T-cell (primary cell): ENCODE measurements at regions of chr1 and their contacts with region 1.

Region 1: DNA sequence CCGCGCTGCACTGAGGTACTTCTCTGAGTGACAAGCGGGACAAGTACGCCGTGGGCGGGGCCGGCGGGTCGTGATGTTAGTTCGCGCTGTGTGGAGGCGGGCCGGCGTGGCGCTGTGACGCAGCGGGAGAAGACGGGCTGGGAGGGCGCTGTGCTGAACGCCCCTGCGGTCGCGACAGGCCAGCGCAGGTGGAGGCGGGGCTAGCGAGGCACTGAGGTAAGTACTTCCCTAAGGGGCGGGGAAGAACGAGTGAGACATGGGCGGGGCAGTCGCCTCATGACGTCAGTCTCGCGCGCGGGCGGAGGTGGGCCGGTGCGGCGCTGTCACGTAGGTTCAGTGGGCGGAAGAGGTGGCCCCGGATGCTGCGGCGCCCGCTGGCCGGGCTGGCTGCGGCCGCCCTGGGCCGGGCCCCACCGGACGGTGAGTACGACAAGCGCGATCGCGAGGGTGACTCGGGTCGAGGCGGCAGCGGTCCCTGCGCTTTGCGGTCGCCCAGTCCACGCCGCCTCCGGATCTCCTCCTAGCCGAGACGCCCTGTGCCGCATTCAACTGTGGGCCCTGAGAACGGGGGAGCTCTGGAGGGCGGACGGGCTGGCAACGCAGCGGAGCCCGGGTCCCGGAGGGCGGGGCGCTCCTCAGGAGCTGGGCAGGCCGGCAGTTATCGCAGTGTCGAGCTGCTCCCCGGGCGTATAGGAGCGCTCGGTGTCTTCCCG is at the start of gene GUK1:
- DNase-seq: peak; percentile 99 to 100 (median 100)
- ATAC-seq: peak; percentile 87 to 96 (median 92)
- H3K4me3 ChIP-seq: peak within 1 kb of the TSS; percentile 85 to 97
- H3K4me3 Mint-ChIP-seq: peak within 1 kb of the TSS; percentile 94 to 96 (median 95)
- H3K27ac ChIP-seq: peak within 1 kb of the TSS; percentile 98
- H3K27ac Mint-ChIP-seq: peak within 1 kb of the TSS; percentile 96 to 98
- H3K4me1 ChIP-seq: peaks cover 12 to 65% of the 10 kb centered on the region in 2 experiments
- H3K4me1 Mint-ChIP-seq: peaks cover 41 to 49% (median 47%) of the 10 kb centered on the region in 3 donors
- H3K27me3 ChIP-seq: no peaks in the 10 kb centered on the region
- H3K27me3 Mint-ChIP-seq: peaks cover 0 to 4% of the 10 kb centered on the region in 2 donors
- total RNA-seq, gene GUK1: 201 to 318 (median 223) TPM

Region 2: DNA sequence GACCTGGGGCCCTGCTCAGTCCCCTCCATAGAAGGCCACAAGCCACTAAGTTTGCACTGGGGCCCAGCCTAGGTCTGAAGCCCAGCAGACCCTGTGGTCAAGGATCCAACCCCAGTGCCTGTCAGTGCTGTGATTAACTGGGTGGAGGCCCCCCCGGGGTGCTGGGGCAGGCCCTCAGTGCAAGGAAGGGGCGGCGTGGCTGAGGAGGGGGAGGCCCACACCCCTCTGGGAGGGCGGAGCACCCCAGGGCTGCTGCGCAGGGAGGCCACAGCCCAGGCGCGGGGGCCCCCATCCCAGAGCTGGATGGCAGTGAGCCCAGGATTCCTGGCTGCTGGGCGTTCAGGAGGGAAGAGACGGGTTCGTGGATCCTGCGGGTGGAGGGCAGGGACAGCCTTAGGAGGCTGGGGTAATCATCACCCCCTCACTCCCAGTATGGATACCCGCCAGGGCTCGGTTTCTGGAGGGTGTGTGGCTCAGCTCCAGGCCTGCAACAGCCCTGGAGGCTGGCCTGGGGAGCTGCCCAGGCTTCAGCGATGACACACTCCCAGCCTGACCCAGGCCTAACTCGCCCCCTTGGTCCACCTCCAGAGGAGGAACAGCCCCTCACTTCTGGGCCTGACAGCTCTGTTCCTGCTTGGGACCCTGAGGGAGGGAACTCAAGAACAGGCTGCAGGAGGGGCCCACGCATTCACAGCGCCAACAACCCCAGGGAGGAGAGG is 10.5 kb after region 1 on chr1:
- CTCF ChIA-PET with region 1: no interaction called
- POLR2A ChIA-PET with region 1: no interaction called
- DNase-seq: no peak
- ATAC-seq: peak in 1 of 4 experiments; percentile 4
- H3K4me3 ChIP-seq: no peak overlapping the region
- H3K4me3 Mint-ChIP-seq: no peak overlapping the region
- H3K27ac ChIP-seq: no peak overlapping the region
- H3K27ac Mint-ChIP-seq: no peak overlapping the region
- H3K4me1 ChIP-seq: peaks cover 3 to 34% of the 10 kb centered on the region in 2 experiments
- H3K4me1 Mint-ChIP-seq: peaks cover 8 to 15% (median 12%) of the 10 kb centered on the region in 3 donors
- H3K27me3 ChIP-seq: peaks cover 0 to 6% of the 10 kb centered on the region in 2 experiments
- H3K27me3 Mint-ChIP-seq: no peaks in the 10 kb centered on the region

Region 3: DNA sequence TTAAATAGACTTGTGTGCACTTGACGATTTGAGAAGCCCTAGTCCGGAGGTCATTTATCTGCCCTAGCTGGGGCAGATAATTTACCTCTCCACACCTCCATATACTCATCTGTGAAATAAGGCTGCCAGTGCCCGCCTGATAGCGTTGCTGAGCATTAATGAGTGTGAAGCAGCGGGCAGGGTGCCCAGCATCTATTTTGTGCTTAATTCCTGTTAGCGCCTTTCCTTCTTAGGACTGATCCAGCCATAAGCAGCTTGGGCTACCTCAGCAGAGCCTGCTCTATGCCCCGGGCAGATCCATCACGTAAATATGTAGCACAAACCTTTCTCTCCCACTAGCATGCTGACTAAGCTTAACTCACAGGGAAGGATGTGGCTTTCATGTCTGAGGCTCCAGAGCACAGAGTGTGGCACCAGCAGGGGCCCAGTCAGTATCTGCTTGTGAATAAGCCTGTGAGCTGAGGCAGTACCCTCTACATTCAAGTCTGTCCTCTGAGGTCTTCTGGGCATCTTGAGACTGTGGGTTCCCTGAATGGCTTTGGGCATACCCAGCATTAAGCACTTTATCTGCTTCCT is 325.6 kb after region 1 on chr1:
- CTCF ChIA-PET with region 1: interaction called in 1 of 2 experiments, 13 read pairs
- POLR2A ChIA-PET with region 1: no interaction called
- DNase-seq: peak in 1 of 35 experiments; percentile 36
- ATAC-seq: peak in 1 of 4 experiments; percentile 14
- H3K4me3 ChIP-seq: no peak overlapping the region
- H3K4me3 Mint-ChIP-seq: peak overlapping the region; percentile 76 to 83 (median 82)
- H3K27ac ChIP-seq: peak overlapping the region; percentile 25
- H3K27ac Mint-ChIP-seq: peak overlapping the region; percentile 76 to 85
- H3K4me1 ChIP-seq: peaks cover 10 to 34% of the 10 kb centered on the region in 2 experiments
- H3K4me1 Mint-ChIP-seq: peaks cover 43 to 48% (median 44%) of the 10 kb centered on the region in 3 donors
- H3K27me3 ChIP-seq: peaks cover 14 to 17% of the 10 kb centered on the region in 2 experiments
- H3K27me3 Mint-ChIP-seq: peaks cover 16 to 23% of the 10 kb centered on the region in 2 donors